ENCODE measurements at regions of chr3 and their contacts with region 1.

Region 1: GRCh38 chr3:177320765-177321247 is 123.5 kb upstream of the TBL1XR1 start:
- DNase-seq: no peak
- H3K4me3 Mint-ChIP-seq: no peak overlapping the region
- H3K27ac Mint-ChIP-seq: peak overlapping the region; percentile 65
- H3K4me1 Mint-ChIP-seq: peaks cover 36% of the 10 kb centered on the region
- H3K27me3 Mint-ChIP-seq: no peaks in the 10 kb centered on the region

Region 2: DNA sequence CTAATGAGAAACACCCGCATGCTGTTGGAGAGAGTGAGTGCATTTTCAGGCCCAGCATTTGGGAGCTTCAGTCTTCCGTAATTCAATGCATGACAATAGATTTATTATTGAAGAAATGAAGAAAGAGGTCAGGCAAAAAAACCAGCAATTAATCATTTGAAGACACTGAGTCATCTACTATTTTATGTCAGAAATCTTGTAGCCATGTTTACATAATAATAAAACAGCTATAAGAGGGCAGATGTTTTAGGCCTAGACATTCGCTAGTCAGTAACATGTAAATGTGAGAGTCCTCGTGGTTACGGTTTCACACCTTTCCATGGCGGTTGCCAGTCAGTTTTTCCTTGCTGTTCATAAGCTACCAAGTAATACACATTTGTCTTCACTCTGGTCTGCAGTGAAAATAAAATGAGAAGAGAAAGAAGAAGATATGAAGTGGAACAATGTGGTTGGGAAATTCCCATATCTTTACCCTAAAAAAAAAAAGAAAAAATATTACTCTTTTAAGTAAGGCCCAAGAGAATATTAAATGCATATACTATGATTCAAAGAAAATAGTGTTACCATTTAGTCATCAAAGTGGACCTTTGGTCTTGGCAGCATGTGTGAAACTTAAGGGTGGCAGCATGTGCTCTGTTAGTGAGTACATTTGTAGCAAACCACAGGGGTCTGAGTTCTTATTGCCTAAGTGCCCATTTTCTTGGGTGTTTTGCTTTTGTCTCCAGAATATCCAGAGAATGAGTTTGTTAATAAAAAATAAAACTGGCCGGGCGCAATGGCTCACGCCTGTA is 16.9 kb after region 1 on chr3:
- CTCF ChIA-PET with region 1: interaction called, 5 read pairs
- intact Hi-C with region 1: loop called (anchors 1 kb)
- DNase-seq: peak; percentile 91
- H3K4me3 Mint-ChIP-seq: no peak overlapping the region
- H3K27ac Mint-ChIP-seq: peak overlapping the region; percentile 42
- H3K4me1 Mint-ChIP-seq: peaks cover 36% of the 10 kb centered on the region
- H3K27me3 Mint-ChIP-seq: peaks cover 5% of the 10 kb centered on the region

Region 3: GRCh38 chr3:177410730-177411129 is 89.9 kb after region 1 on chr3:
- CTCF ChIA-PET with region 1: no interaction called
- intact Hi-C with region 1: no loop called
- DNase-seq: peak; percentile 19
- H3K4me3 Mint-ChIP-seq: no peak overlapping the region
- H3K27ac Mint-ChIP-seq: no peak overlapping the region
- H3K4me1 Mint-ChIP-seq: peaks cover 9% of the 10 kb centered on the region
- H3K27me3 Mint-ChIP-seq: no peaks in the 10 kb centered on the region